ENCODE measurements at regions of chr15 and their contacts with region 1.

Region 1: GRCh38 chr15:100349696-100350433 is 8.1 kb upstream of the ADAMTS17 start:
- DNase-seq: peak; percentile 81
- H3K4me3 ChIP-seq: peak overlapping the region; percentile 18 to 59 (median 55)
- H3K27ac ChIP-seq: no peak overlapping the region
- H3K4me1 ChIP-seq: no peaks in the 10 kb centered on the region
- H3K27me3 ChIP-seq: no peaks in the 10 kb centered on the region
- CTCF ChIP-seq: peak; percentile 89 to 98
- POLR2A ChIP-seq: no peak

Region 2: DNA sequence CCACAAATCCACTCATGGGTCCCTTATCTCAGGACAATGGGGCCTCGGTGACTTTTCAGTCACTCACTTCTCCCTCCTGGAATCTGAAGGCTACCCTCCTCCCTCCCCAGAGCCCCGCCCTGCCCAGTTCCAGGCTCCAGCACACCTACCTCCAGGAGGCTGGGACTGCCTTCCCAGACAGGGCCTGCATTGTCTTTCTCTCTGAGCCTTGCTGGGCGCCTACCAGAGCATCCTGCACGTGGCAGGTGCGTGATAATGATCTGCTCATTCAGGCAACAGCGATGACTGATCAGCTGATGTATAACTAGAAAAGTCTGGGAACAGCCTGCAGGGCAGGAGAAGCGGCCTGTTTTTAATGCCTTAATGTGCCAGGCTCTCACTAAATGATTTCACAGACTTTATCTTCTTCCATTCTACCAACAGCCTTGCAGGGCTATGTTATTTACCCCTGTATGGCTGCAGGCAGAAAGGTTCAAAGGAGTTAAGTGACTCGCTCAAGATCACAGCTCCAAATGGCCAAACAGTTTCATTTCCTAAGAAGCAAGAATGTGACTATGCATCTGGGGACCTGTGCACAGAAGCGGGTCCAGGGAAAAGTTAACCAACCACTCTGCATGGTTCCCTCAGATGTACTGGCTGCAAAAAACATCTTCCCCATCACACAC is 14.4 kb before region 1 on chr15:
- CTCF ChIA-PET with region 1: interaction called, 54 read pairs
- POLR2A ChIA-PET with region 1: no interaction called
- dilution Hi-C with region 1: no loop called
- intact Hi-C with region 1: no loop called
- DNase-seq: no peak
- H3K4me3 ChIP-seq: no peak overlapping the region
- H3K27ac ChIP-seq: no peak overlapping the region
- H3K4me1 ChIP-seq: no peaks in the 10 kb centered on the region
- H3K27me3 ChIP-seq: peaks cover 2 to 5% of the 10 kb centered on the region in 2 experiments
- CTCF ChIP-seq: no peak
- POLR2A ChIP-seq: no peak

Region 3: DNA sequence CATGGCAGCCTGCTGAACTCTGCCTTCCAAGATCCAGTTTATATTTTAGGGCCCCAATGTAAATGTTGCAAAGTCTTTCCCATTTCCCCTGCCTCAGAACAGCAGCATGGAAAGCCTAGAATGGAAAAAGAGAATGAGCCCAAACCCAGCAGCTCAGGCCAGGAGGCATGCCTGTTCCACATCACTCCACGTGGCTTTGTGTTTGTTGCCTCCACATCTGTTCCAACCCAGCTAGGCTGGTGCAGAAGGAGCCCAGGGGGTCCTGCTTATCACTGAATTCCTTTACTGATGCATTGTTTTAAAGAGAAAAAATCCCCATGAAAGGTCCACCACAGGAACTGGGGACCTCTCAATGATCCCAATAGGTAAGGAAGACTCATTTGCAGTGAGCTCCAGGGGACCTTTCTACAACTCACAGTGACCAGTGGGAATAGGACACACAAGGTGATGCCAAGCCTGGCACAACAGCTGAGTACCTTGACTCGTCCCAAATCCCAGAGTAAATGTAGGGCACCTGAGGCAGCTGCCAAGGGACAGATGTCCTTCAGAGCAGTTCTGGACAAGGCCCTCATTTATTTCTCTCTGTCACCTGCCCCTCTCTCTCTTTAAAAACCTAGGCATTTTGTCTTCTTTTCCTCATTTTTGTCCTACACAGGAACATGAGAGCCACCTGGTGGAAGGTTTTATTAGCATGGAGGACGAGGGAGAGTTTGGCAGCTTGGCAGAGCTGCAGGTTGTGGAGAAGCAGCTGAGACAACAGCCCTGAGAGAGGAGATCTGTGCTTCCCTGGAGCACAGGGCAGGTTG is 33.6 kb after region 1 on chr15:
- CTCF ChIA-PET with region 1: no interaction called
- POLR2A ChIA-PET with region 1: no interaction called
- dilution Hi-C with region 1: no loop called
- intact Hi-C with region 1: no loop called
- DNase-seq: no peak
- H3K4me3 ChIP-seq: no peak overlapping the region
- H3K27ac ChIP-seq: no peak overlapping the region
- H3K4me1 ChIP-seq: no peaks in the 10 kb centered on the region
- H3K27me3 ChIP-seq: no peaks in the 10 kb centered on the region
- CTCF ChIP-seq: no peak
- POLR2A ChIP-seq: no peak

Region 4: GRCh38 chr15:100572362-100572983 is 222.6 kb after region 1 on chr15:
- CTCF ChIA-PET with region 1: interaction called, 69 read pairs
- POLR2A ChIA-PET with region 1: no interaction called
- dilution Hi-C with region 1: no loop called
- intact Hi-C with region 1: loop called (anchors 1 kb)
- DNase-seq: peak; percentile 16
- H3K4me3 ChIP-seq: no peak overlapping the region
- H3K27ac ChIP-seq: no peak overlapping the region
- H3K4me1 ChIP-seq: no peaks in the 10 kb centered on the region
- H3K27me3 ChIP-seq: no peaks in the 10 kb centered on the region
- CTCF ChIP-seq: peak; percentile 4 to 26
- POLR2A ChIP-seq: no peak

Region 5: GRCh38 chr15:100602064-100602822 is 252.4 kb after region 1 on chr15 and contains the starts of genes ASB7 and LINS1:
- CTCF ChIA-PET with region 1: interaction called, 17 read pairs
- POLR2A ChIA-PET with region 1: no interaction called
- dilution Hi-C with region 1: no loop called
- intact Hi-C with region 1: loop called (anchors 1 kb)
- DNase-seq: peak; percentile 100
- H3K4me3 ChIP-seq: peak within 1 kb of the TSS; percentile 84 to 99 (median 96)
- H3K27ac ChIP-seq: peak within 1 kb of the TSS; percentile 71
- H3K4me1 ChIP-seq: peaks cover 21% of the 10 kb centered on the region
- H3K27me3 ChIP-seq: no peaks in the 10 kb centered on the region
- CTCF ChIP-seq: no peak
- POLR2A ChIP-seq: no peak
- total RNA-seq, gene ASB7: 13.0 and 13.3 TPM in 2 replicates
- total RNA-seq, gene LINS1: 9.6 and 14.7 TPM in 2 replicates